ENCODE measurements at regions of chr16 and their contacts with region 1.

Region 1: GRCh38 chr16:85821441-85822135 is 22.1 kb downstream of the COX4I1 start:
- DNase-seq: peak; percentile 88
- ATAC-seq: peak; percentile 93
- H3K4me3 Mint-ChIP-seq: no peak overlapping the region
- H3K27ac Mint-ChIP-seq: no peak overlapping the region
- H3K4me1 Mint-ChIP-seq: peaks cover 29% of the 10 kb centered on the region
- H3K27me3 Mint-ChIP-seq: no peaks in the 10 kb centered on the region
- CTCF ChIP-seq: peak; percentile 69

Region 2: GRCh38 chr16:85777583-85778298 is 43.8 kb before region 1 on chr16:
- CTCF ChIA-PET with region 1: no interaction called
- POLR2A ChIA-PET with region 1: no interaction called
- intact Hi-C with region 1: no loop called
- DNase-seq: no peak
- ATAC-seq: no peak
- H3K4me3 Mint-ChIP-seq: no peak overlapping the region
- H3K27ac Mint-ChIP-seq: no peak overlapping the region
- H3K4me1 Mint-ChIP-seq: no peaks in the 10 kb centered on the region
- H3K27me3 Mint-ChIP-seq: no peaks in the 10 kb centered on the region
- CTCF ChIP-seq: no peak

Region 3: GRCh38 chr16:85838381-85838780 is 16.8 kb after region 1 on chr16:
- CTCF ChIA-PET with region 1: interaction called, 49 read pairs
- POLR2A ChIA-PET with region 1: interaction called, 8 read pairs
- intact Hi-C with region 1: no loop called
- DNase-seq: no peak
- ATAC-seq: no peak
- H3K4me3 Mint-ChIP-seq: no peak overlapping the region
- H3K27ac Mint-ChIP-seq: no peak overlapping the region
- H3K4me1 Mint-ChIP-seq: peaks cover 8% of the 10 kb centered on the region
- H3K27me3 Mint-ChIP-seq: no peaks in the 10 kb centered on the region
- CTCF ChIP-seq: no peak

Region 4: DNA sequence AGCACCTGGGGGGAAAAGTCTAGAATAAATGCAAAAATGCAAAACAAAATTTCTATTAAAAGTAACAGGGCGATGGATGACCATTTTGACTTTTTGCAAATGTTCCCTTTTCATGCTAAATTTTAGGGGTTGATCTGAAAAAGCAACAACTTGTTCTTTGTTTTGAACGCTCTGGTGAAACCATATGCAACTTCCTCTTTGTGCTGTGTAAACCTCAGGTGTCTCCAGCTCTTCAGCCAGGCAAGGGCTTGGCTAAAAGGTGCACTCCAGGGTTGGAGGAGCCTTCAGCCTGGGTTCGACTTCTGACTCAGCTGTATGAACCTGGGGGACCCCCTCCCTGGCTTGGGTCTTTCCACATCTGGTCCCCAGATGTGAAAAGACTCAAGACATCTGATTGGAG is 86.9 kb after region 1 on chr16:
- CTCF ChIA-PET with region 1: interaction called, 54 read pairs
- POLR2A ChIA-PET with region 1: interaction called, 8 read pairs
- intact Hi-C with region 1: no loop called
- DNase-seq: peak; percentile 20
- ATAC-seq: peak; percentile 60
- H3K4me3 Mint-ChIP-seq: peak overlapping the region; percentile 77
- H3K27ac Mint-ChIP-seq: peak overlapping the region; percentile 97
- H3K4me1 Mint-ChIP-seq: peaks cover 99% of the 10 kb centered on the region
- H3K27me3 Mint-ChIP-seq: no peaks in the 10 kb centered on the region
- CTCF ChIP-seq: no peak

Region 5: GRCh38 chr16:85928401-85928820 is 106.8 kb after region 1 on chr16:
- CTCF ChIA-PET with region 1: interaction called, 13 read pairs
- POLR2A ChIA-PET with region 1: interaction called, 8 read pairs
- intact Hi-C with region 1: no loop called
- DNase-seq: no peak
- ATAC-seq: peak; percentile 29
- H3K4me3 Mint-ChIP-seq: peak overlapping the region; percentile 68
- H3K27ac Mint-ChIP-seq: peak overlapping the region; percentile 80
- H3K4me1 Mint-ChIP-seq: peaks cover 86% of the 10 kb centered on the region
- H3K27me3 Mint-ChIP-seq: no peaks in the 10 kb centered on the region
- CTCF ChIP-seq: no peak

Region 6: DNA sequence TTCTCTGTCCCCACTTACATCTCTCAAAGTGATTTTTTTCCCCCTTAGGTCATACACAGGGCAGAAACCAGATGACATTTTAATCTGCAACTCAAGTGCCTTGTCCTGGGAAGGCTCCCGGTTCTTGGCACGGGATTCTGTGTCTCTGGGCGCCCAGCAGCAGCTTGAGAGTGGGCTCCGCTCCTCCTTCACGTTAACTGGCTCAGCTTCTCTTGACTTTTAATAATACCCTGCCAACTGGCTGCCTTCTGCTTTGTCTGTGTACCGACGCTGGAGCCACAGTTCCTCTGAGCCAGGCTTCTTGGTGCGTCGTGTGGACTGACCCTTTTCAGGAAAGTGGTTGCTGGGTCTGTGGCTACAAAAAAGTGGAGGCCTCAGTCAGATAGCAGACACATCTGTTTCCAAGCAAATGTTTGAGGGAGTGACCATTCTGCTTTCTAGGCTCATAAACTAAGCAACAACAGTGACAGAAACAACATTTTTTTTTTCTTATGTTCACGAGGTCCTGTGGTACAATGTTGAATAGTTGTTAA is 142.2 kb after region 1 on chr16:
- CTCF ChIA-PET with region 1: interaction called, 16 read pairs
- POLR2A ChIA-PET with region 1: no interaction called
- intact Hi-C with region 1: no loop called
- DNase-seq: no peak
- ATAC-seq: no peak
- H3K4me3 Mint-ChIP-seq: no peak overlapping the region
- H3K27ac Mint-ChIP-seq: peak overlapping the region; percentile 41
- H3K4me1 Mint-ChIP-seq: peaks cover 53% of the 10 kb centered on the region
- H3K27me3 Mint-ChIP-seq: no peaks in the 10 kb centered on the region
- CTCF ChIP-seq: no peak

Region 7: DNA sequence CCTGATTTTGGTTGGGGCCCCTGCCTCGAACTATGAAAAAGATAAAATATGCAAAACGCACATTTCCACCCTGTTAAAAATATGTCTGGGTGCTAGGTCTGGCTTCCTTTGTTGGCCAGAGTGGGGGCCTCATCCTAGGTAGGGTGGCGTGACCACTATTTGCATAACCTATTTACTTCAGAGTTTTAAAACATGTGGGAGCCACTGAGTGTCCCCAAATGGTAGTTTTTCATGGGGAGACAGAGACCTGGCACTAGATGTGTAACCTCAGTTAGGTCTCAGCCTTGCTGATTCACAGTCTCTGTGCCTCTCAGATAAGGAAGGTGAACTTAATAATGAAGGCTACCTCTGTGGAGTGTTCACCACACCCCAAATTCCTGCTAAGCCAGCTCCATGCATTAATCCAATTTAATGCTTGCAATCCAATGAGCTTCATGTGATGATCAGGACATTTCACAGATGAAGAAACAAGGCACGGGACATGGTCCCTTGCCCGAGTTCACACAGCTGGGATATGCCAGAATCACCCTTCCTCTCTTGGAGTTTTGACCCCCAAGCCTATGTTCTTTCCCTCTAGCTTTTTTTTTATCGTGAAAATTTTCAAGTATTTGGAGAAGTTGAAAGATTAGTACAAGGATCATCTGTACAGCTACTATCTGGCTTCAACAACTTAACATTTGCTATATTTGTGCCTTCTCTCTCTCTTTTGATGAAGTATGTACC is 180.8 kb after region 1 on chr16:
- CTCF ChIA-PET with region 1: interaction called, 31 read pairs
- POLR2A ChIA-PET with region 1: no interaction called
- intact Hi-C with region 1: no loop called
- DNase-seq: peak; percentile 5
- ATAC-seq: peak; percentile 60
- H3K4me3 Mint-ChIP-seq: no peak overlapping the region
- H3K27ac Mint-ChIP-seq: peak overlapping the region; percentile 77
- H3K4me1 Mint-ChIP-seq: peaks cover 61% of the 10 kb centered on the region
- H3K27me3 Mint-ChIP-seq: no peaks in the 10 kb centered on the region
- CTCF ChIP-seq: no peak

Region 8: GRCh38 chr16:86072328-86073102 is 250.9 kb after region 1 on chr16:
- CTCF ChIA-PET with region 1: interaction called, 4 read pairs
- POLR2A ChIA-PET with region 1: no interaction called
- intact Hi-C with region 1: loop called (anchors 1 kb)
- DNase-seq: no peak
- ATAC-seq: no peak
- H3K4me3 Mint-ChIP-seq: no peak overlapping the region
- H3K27ac Mint-ChIP-seq: no peak overlapping the region
- H3K4me1 Mint-ChIP-seq: no peaks in the 10 kb centered on the region
- H3K27me3 Mint-ChIP-seq: peaks cover 30% of the 10 kb centered on the region
- CTCF ChIP-seq: no peak